GM12878 (cell line): ENCODE measurements at regions of chr9 and their contacts with region 1.

Region 1: DNA sequence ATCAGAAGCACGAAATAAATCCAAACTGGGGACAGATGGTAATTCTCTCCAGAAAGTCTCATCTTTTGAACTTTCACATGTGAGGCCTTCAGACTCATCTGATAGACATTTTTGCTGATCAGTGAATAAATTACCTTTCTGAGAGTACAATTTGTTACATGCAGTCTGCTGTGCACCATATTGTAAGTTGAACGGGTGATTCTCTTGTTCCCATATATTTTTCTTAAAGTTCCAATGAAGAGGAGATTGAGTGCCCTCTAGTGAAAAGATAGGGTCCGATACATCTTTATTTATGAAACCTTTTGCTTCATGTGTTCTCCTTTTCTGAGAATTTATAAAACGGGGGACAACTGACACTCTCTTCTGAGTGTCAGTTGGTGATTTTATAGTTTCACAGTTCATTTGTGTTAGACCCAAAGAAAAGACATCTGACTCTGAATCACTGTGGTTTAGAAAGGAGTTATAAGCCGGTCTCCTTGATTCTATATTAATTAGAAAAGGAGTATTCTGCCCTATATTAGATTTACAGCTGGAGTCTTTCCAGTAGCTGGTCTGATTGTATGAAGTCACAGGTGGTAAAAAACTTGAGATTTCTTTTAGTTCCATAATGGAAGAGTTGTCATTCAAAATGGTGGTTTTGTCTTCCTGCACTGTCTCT is 30.4 kb downstream of the GNG10 start:
- DNase-seq: no peak
- ATAC-seq: peak; percentile 60
- H3K4me3 ChIP-seq: no peak overlapping the region
- H3K27ac ChIP-seq: no peak overlapping the region
- H3K4me1 ChIP-seq: no peaks in the 10 kb centered on the region
- H3K27me3 ChIP-seq: no peaks in the 10 kb centered on the region
- CTCF ChIP-seq: peak; percentile 9 to 42 (median 40); a peak in 2 of 6 replicates
- EP300 ChIP-seq: no peak
- POLR2A ChIP-seq: no peak
- RAD21 ChIP-seq: peak; percentile 48

Region 2: DNA sequence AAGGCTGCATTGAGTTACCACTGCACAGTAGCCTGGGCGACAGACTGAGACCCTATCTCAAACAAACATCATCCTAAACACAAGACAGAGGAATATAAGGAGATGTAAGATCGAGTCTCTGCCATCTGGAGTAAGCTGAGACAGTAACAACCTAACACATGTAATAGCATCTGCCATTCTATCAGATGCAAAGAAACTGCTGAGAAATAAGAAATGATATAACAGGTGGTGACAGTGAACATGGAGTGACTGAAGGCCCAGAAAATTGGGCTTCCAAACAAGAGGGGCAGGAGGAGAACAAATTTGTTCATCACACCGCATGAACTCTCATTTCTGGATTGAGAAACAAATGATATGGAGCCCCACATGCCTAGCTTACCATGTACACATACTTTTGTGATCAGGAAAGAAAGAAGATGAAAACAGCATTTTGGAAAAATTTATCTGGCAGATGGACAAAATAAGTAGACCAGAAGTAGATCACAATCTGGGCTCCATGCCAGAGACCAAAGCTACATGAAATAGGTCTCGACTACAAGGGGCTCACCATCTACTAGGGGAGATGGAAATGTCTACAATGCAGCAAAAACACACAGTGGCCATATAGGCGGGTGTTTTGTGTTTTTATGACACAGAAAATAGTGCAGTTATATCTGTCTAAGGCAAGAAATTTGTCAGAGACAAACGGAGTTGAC is 253.1 kb before region 1 on chr9:
- CTCF ChIA-PET with region 1: no interaction called
- POLR2A ChIA-PET with region 1: no interaction called
- RAD21 ChIA-PET with region 1: no interaction called
- SMC1A ChIA-PET with region 1: no interaction called
- in situ Hi-C with region 1: no loop called
- intact Hi-C with region 1: loop called (anchors 10 kb)
- DNase-seq: no peak
- ATAC-seq: no peak
- H3K4me3 ChIP-seq: no peak overlapping the region
- H3K27ac ChIP-seq: no peak overlapping the region
- H3K4me1 ChIP-seq: no peaks in the 10 kb centered on the region
- H3K27me3 ChIP-seq: no peaks in the 10 kb centered on the region
- CTCF ChIP-seq: no peak
- EP300 ChIP-seq: no peak
- POLR2A ChIP-seq: no peak
- RAD21 ChIP-seq: no peak

Region 3: DNA sequence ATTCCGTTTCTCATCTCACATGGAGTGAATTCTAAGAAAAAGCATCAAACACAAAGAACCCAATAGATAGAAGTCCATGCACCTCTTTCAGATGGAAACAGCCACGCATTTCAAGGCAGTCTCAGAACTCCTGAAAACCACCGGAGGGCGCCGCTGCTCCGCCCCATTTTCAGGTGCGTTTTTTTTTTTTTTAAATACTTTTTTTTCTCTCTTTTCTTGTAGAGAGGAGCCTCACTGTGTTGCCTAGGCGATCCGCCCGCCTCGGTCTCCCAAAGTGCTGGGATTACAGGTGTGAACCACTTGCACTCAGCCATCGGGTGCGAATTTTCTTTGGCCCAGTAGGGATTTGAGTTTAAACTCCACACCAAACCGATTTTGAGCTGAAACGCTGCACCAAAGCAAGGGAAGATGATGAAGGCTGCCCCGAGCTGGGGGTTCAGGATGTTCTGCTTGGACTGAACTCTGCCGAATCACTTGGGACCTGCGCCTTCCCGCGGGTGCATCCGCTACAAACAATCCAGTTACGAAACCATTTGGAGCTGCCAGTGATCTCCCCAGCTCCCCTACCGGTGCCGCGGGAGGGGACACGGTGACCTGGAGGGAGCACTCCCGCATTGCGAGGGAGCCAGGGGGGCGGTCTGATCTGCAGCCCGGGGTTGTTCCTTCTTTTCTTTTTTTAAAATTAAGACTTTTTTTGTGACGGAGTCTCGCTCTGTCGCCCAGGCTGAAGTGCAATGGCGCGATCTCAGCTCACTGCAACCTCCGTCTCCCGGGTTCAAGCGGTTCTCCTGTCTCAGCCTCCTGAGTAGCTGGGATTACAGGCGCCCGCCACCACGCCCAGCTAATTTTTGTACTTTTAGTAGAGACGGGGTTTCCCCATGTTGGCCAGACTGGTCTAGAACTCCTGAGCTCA is 93.7 kb before region 1 on chr9:
- CTCF ChIA-PET with region 1: interaction called, 7 read pairs
- POLR2A ChIA-PET with region 1: no interaction called
- RAD21 ChIA-PET with region 1: interaction called, 13 read pairs
- SMC1A ChIA-PET with region 1: no interaction called
- in situ Hi-C with region 1: no loop called
- intact Hi-C with region 1: loop called (anchors 2 kb)
- DNase-seq: no peak
- ATAC-seq: peak; percentile 75
- H3K4me3 ChIP-seq: peak overlapping the region; percentile 78
- H3K27ac ChIP-seq: no peak overlapping the region
- H3K4me1 ChIP-seq: no peaks in the 10 kb centered on the region
- H3K27me3 ChIP-seq: peaks cover 0 to 4% of the 10 kb centered on the region in 2 experiments; a peak in 2 of 4 replicates
- CTCF ChIP-seq: peak; percentile 52 to 67 (median 54); a peak in 5 of 6 replicates
- EP300 ChIP-seq: no peak
- POLR2A ChIP-seq: no peak
- RAD21 ChIP-seq: peak; percentile 74